Activated naive CD4-positive, alpha-beta T cell treated with anti-CD3 and anti-CD28 coated beads, Interleukin-2, amount 10 ng/mL, durations not matched to agents 7 days and 5 days (primary cell): ENCODE measurements at regions of chr18 and their contacts with region 1.

Region 1: GRCh38 chr18:12391618-12392165 is 14.7 kb upstream of the AFG3L2 start:
- DNase-seq: peak; percentile 69
- H3K4me3 Mint-ChIP-seq: no peak overlapping the region
- H3K27ac Mint-ChIP-seq: no peak overlapping the region
- H3K4me1 Mint-ChIP-seq: no peaks in the 10 kb centered on the region
- H3K27me3 Mint-ChIP-seq: peaks cover 20% of the 10 kb centered on the region

Region 2: GRCh38 chr18:12657684-12658425 is 266.2 kb after region 1 on chr18 and contains the start of gene SPIRE1:
- CTCF ChIA-PET with region 1: interaction called, 29 read pairs
- DNase-seq: peak; percentile 54
- H3K4me3 Mint-ChIP-seq: peak within 1 kb of the TSS; percentile 74
- H3K27ac Mint-ChIP-seq: no peak within 1 kb of the TSS
- H3K4me1 Mint-ChIP-seq: peaks cover 23% of the 10 kb centered on the region
- H3K27me3 Mint-ChIP-seq: peaks cover 36% of the 10 kb centered on the region